ENCODE measurements at regions of chr4 and their contacts with region 1.

Region 1: GRCh38 chr4:183444214-183445066 is at the start of gene CDKN2AIP:
- DNase-seq: peak; percentile 93 to 96 (median 96)
- H3K4me3 ChIP-seq: peak within 1 kb of the TSS; percentile 77 to 85
- H3K4me3 Mint-ChIP-seq: peak within 1 kb of the TSS; percentile 92 to 99 (median 98)
- H3K27ac ChIP-seq: peak within 1 kb of the TSS; percentile 96
- H3K27ac Mint-ChIP-seq: peak within 1 kb of the TSS; percentile 96 to 99 (median 98)
- H3K4me1 ChIP-seq: peaks cover 52% of the 10 kb centered on the region
- H3K4me1 Mint-ChIP-seq: peaks cover 32 to 63% (median 43%) of the 10 kb centered on the region in 4 donors
- H3K27me3 ChIP-seq: no peaks in the 10 kb centered on the region
- H3K27me3 Mint-ChIP-seq: no peaks in the 10 kb centered on the region
- total RNA-seq, gene CDKN2AIP: 48.3 to 51.1 TPM

Region 2: GRCh38 chr4:182917182-182918043 is 527.0 kb before region 1 on chr4 and contains the start of gene DCTD:
- CTCF ChIA-PET with region 1: no interaction called
- POLR2A ChIA-PET with region 1: interaction called, 9 read pairs
- intact Hi-C with region 1: loop called (anchors 2 kb)
- DNase-seq: peak; percentile 78 to 84 (median 81)
- H3K4me3 ChIP-seq: peak within 1 kb of the TSS; percentile 55 to 81
- H3K4me3 Mint-ChIP-seq: peak within 1 kb of the TSS; percentile 83 to 95 (median 92)
- H3K27ac ChIP-seq: peak within 1 kb of the TSS; percentile 94
- H3K27ac Mint-ChIP-seq: peak within 1 kb of the TSS; percentile 85 to 98 (median 95)
- H3K4me1 ChIP-seq: peaks cover 30% of the 10 kb centered on the region
- H3K4me1 Mint-ChIP-seq: peaks cover 27 to 64% (median 39%) of the 10 kb centered on the region in 4 donors
- H3K27me3 ChIP-seq: no peaks in the 10 kb centered on the region
- H3K27me3 Mint-ChIP-seq: no peaks in the 10 kb centered on the region
- total RNA-seq, gene DCTD: 66.6 to 67.7 TPM

Region 3: GRCh38 chr4:183098723-183099536 is 345.5 kb before region 1 on chr4 and contains the start of gene WWC2:
- CTCF ChIA-PET with region 1: no interaction called
- POLR2A ChIA-PET with region 1: interaction called, 12 read pairs
- intact Hi-C with region 1: no loop called
- DNase-seq: peak; percentile 62 to 71 (median 62)
- H3K4me3 ChIP-seq: peak within 1 kb of the TSS; percentile 45 to 52
- H3K4me3 Mint-ChIP-seq: peak within 1 kb of the TSS; percentile 76 to 86 (median 78)
- H3K27ac ChIP-seq: no peak within 1 kb of the TSS
- H3K27ac Mint-ChIP-seq: peak within 1 kb of the TSS in 2 of 7 donors; percentile 19 to 50
- H3K4me1 ChIP-seq: peaks cover 14% of the 10 kb centered on the region
- H3K4me1 Mint-ChIP-seq: peaks cover 8 to 37% (median 21%) of the 10 kb centered on the region in 4 donors
- H3K27me3 ChIP-seq: peaks cover 3% of the 10 kb centered on the region
- H3K27me3 Mint-ChIP-seq: peaks cover 0 to 3% of the 10 kb centered on the region in 2 donors
- total RNA-seq, gene WWC2: 7.3 to 7.6 TPM

Region 4: DNA sequence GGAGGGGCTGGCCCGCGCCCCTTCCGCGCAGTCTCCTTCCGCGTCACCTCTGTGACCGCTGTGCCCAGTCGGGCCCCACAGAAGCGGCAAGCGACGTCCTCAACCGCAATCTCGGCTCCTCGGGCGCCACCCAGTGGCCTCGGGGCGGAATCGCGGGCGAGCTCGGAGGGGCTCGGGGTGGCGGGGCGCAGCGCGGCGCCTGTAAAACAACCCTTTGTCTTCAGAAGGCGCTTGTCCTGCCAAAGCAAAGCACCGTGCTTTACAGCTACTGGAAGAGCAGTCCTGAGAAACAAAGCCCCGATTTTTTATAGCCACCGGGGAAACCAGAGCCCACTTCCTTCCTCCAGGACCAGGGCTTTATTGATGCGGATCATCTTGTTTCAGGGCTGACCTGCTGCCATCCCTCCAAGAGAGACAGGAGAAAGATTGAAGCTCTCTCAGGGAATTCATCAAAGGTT is 37.3 kb before region 1 on chr4:
- CTCF ChIA-PET with region 1: interaction called, 13 read pairs
- POLR2A ChIA-PET with region 1: interaction called, 38 read pairs
- intact Hi-C with region 1: loop called (anchors 1 kb)
- DNase-seq: peak; percentile 86 to 92 (median 87)
- H3K4me3 ChIP-seq: peak overlapping the region; percentile 62 to 73
- H3K4me3 Mint-ChIP-seq: peak overlapping the region; percentile 77 to 93 (median 84)
- H3K27ac ChIP-seq: peak overlapping the region; percentile 49
- H3K27ac Mint-ChIP-seq: peak overlapping the region; percentile 75 to 95 (median 88)
- H3K4me1 ChIP-seq: no peaks in the 10 kb centered on the region
- H3K4me1 Mint-ChIP-seq: peaks cover 5 to 19% (median 11%) of the 10 kb centered on the region in 4 donors
- H3K27me3 ChIP-seq: no peaks in the 10 kb centered on the region
- H3K27me3 Mint-ChIP-seq: no peaks in the 10 kb centered on the region

Region 5: DNA sequence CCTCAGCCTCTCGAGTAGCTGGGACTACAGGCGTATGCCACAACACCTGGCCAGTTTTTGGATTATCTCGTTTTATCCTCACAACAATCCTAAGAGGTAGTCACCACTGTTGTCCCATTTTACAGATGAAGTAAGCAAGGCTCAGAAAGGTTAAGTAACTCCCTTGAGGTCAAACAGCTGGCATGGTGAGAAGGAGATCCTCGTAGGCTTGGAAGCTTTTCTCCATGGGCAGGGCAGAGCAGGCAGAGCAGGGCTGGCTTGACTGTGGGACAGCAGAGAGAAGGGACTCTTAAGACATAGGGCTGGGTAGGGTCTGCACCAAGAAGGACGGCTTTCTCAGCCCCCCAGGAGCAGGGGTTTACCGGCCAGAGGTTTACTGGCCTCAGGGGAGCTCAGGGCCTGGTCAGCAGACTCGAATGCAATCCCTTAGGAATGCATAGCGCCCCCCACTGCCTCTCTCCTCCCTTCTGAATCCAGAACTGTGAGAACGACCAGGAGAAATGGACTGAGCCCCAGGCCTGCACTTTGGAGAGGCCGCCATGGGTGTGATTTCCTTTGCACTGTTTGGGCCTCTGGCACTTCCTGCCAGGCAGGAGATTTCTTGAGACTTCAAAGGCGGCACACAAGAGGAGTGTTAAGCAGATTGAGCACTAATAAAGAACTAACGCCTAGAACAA is 14.0 kb before region 1 on chr4:
- CTCF ChIA-PET with region 1: interaction called, 18 read pairs
- POLR2A ChIA-PET with region 1: interaction called, 95 read pairs
- intact Hi-C with region 1: loop called (anchors 1 kb)
- DNase-seq: peak; percentile 32 to 51 (median 35)
- H3K4me3 ChIP-seq: no peak overlapping the region
- H3K4me3 Mint-ChIP-seq: peak overlapping the region; percentile 6 to 88 (median 68)
- H3K27ac ChIP-seq: peak overlapping the region; percentile 13
- H3K27ac Mint-ChIP-seq: peak overlapping the region; percentile 63 to 94 (median 88)
- H3K4me1 ChIP-seq: peaks cover 37% of the 10 kb centered on the region
- H3K4me1 Mint-ChIP-seq: peaks cover 20 to 50% (median 39%) of the 10 kb centered on the region in 4 donors
- H3K27me3 ChIP-seq: no peaks in the 10 kb centered on the region
- H3K27me3 Mint-ChIP-seq: no peaks in the 10 kb centered on the region

Region 6: GRCh38 chr4:183455431-183456195 is 11.2 kb after region 1 on chr4:
- CTCF ChIA-PET with region 1: no interaction called
- POLR2A ChIA-PET with region 1: interaction called, 23 read pairs
- intact Hi-C with region 1: no loop called
- DNase-seq: peak in 1 of 5 donors; percentile 13
- H3K4me3 ChIP-seq: no peak overlapping the region
- H3K4me3 Mint-ChIP-seq: peak overlapping the region in 4 of 8 donors; percentile 3 to 44 (median 36)
- H3K27ac ChIP-seq: no peak overlapping the region
- H3K27ac Mint-ChIP-seq: peak overlapping the region in 4 of 7 donors; percentile 12 to 64 (median 37)
- H3K4me1 ChIP-seq: peaks cover 12% of the 10 kb centered on the region
- H3K4me1 Mint-ChIP-seq: peaks cover 12 to 35% (median 17%) of the 10 kb centered on the region in 4 donors
- H3K27me3 ChIP-seq: no peaks in the 10 kb centered on the region
- H3K27me3 Mint-ChIP-seq: no peaks in the 10 kb centered on the region

Region 7: DNA sequence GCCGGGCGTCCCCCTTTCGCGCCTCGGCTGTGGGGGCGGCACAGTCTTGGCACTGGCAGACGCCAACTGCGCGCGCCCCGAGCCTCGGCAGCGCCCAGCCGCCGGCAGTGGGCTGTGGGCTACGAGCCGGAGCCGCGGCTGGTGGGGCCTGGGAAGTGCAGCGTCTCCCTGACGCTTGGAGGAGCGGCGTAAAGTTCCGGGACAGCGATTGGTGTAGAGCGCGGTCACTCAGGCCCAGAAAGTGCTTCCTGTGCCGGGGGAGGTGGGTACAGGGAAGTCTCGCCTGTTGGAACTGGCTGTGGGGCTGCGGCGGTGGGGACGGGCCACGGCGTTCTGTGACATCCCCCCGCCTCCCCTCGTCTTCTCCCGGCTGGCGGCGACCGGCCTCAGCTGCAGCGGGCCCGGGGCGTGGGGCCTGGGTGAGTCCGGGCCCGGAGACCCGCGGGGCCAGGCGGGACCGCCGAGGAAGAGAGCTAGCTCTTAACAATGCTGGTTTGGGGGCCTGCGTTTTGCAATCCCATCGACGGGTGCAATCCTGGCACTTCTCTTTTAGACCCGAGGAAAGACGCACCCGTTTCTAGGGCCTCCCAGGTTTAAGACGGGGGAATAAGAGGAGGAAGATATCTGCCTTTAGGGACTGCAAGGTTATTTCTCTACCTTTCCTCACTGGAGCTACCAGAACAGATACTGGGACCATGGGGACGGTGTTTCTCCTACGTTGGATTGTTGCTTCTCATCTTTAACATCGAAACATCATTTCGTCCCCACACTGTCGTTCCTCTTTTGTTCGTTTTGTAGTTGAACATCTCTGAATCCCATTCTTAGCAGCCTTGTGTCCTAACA is 214.8 kb after region 1 on chr4 and contains the starts of genes RWDD4 and TRAPPC11:
- CTCF ChIA-PET with region 1: interaction called, 3 read pairs
- POLR2A ChIA-PET with region 1: interaction called, 9 read pairs
- intact Hi-C with region 1: loop called (anchors 1 kb)
- DNase-seq: peak; percentile 95 to 98 (median 96)
- H3K4me3 ChIP-seq: peak within 1 kb of the TSS; percentile 89 to 91
- H3K4me3 Mint-ChIP-seq: peak within 1 kb of the TSS; percentile 91 to 98 (median 94)
- H3K27ac ChIP-seq: peak within 1 kb of the TSS; percentile 93
- H3K27ac Mint-ChIP-seq: peak within 1 kb of the TSS; percentile 75 to 99 (median 97)
- H3K4me1 ChIP-seq: peaks cover 37% of the 10 kb centered on the region
- H3K4me1 Mint-ChIP-seq: peaks cover 25 to 54% (median 41%) of the 10 kb centered on the region in 4 donors
- H3K27me3 ChIP-seq: no peaks in the 10 kb centered on the region
- H3K27me3 Mint-ChIP-seq: no peaks in the 10 kb centered on the region
- total RNA-seq, gene RWDD4: 12.0 to 13.8 TPM
- total RNA-seq, gene TRAPPC11: 42.2 to 51.0 TPM